ENCODE measurements at regions of chr5 and their contacts with region 1.

Region 1: GRCh38 chr5:142713121-142713706 is 27.3 kb upstream of the FGF1 start:
- DNase-seq: peak; percentile 91 to 95
- H3K4me3 ChIP-seq: peak overlapping the region; percentile 56
- H3K4me3 Mint-ChIP-seq: peak overlapping the region; percentile 73
- H3K27ac Mint-ChIP-seq: no peak overlapping the region
- H3K4me1 ChIP-seq: no peaks in the 10 kb centered on the region; the same call in 1 of the 2 replicates
- H3K4me1 Mint-ChIP-seq: peaks cover 7% of the 10 kb centered on the region
- H3K27me3 ChIP-seq: no peaks in the 10 kb centered on the region
- H3K27me3 Mint-ChIP-seq: no peaks in the 10 kb centered on the region
- CTCF ChIP-seq: peak; percentile 96 to 98

Region 2: DNA sequence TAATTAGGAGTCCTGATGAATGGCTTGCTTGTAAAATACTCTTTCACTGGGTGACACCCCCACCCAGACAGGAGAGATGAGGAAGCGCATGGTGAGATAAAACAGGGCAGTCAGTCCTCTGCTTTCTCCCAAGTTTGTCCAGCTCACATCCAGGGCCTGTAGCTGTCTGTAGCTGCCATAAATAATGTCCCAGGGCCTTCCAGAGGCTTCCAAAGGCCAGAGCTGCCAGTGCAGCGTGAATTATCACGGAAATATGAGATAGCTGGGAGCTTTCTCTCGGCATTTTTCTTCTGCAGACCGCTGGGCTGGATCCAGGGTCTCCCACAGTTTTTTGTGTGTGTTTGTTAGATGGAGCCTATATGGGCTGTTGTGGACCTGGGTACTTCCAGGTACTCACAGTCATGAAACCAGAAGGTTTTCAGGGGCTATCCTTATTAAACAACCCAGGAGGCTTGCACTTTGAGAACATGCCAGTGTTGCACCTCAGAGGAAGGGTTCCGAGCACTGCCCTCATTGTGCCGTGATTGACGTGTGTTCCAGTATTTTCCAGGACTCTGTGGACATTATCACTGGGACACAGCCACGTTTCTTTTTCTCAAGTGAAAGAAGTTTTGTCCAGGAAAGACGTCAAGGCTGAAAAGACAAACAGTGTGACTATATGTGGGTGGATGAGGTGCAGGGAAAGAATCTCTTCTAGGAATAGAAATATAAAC is 144.8 kb before region 1 on chr5:
- CTCF ChIA-PET with region 1: no interaction called
- POLR2A ChIA-PET with region 1: no interaction called
- intact Hi-C with region 1: no loop called
- DNase-seq: no peak
- H3K4me3 ChIP-seq: no peak overlapping the region
- H3K4me3 Mint-ChIP-seq: no peak overlapping the region
- H3K27ac Mint-ChIP-seq: no peak overlapping the region
- H3K4me1 ChIP-seq: no peaks in the 10 kb centered on the region
- H3K4me1 Mint-ChIP-seq: no peaks in the 10 kb centered on the region
- H3K27me3 ChIP-seq: no peaks in the 10 kb centered on the region
- H3K27me3 Mint-ChIP-seq: no peaks in the 10 kb centered on the region
- CTCF ChIP-seq: no peak

Region 3: GRCh38 chr5:142655339-142656267 is 57.6 kb before region 1 on chr5:
- CTCF ChIA-PET with region 1: interaction called, 24 read pairs
- POLR2A ChIA-PET with region 1: no interaction called
- intact Hi-C with region 1: no loop called
- DNase-seq: peak; percentile 73 to 87
- H3K4me3 ChIP-seq: no peak overlapping the region
- H3K4me3 Mint-ChIP-seq: no peak overlapping the region
- H3K27ac Mint-ChIP-seq: no peak overlapping the region
- H3K4me1 ChIP-seq: no peaks in the 10 kb centered on the region
- H3K4me1 Mint-ChIP-seq: no peaks in the 10 kb centered on the region
- H3K27me3 ChIP-seq: no peaks in the 10 kb centered on the region
- H3K27me3 Mint-ChIP-seq: peaks cover 8% of the 10 kb centered on the region
- CTCF ChIP-seq: peak; percentile 91 to 99

Region 4: DNA sequence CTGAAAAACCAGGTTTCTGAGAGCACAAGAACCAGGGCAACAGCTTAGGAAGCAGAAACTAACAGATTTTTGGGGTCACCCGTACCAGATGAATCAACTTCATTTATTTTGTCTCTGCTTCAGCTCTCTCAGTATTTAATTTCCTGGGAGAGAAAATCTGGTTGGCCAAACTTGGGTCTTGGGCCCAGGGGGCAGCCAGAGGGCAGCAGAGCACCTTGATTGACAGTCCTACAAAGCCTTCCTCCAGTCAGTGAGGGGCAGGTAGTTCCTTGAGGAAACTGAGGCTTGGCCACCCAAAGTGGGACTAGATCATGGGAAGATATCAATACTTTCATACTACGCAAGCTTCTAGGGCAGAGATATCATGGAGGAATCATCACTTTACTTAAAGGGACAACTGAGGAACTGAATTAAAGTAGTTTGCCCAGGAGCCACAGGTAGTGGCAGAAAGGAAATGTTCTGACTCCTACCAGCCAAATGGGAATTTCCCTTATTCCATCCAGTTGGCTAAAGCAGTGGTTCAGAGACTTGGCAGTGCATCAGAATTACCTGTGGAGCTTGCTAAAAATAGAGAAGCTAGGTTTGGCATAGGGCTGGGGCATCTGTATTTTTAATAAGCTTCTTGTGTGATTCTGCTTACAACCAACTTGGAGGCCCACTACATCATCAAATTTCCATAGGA is 35.5 kb after region 1 on chr5:
- CTCF ChIA-PET with region 1: interaction called, 17 read pairs
- POLR2A ChIA-PET with region 1: no interaction called
- intact Hi-C with region 1: loop called (anchors 1 kb)
- DNase-seq: peak; percentile 60 to 73
- H3K4me3 ChIP-seq: no peak overlapping the region
- H3K4me3 Mint-ChIP-seq: no peak overlapping the region
- H3K27ac Mint-ChIP-seq: no peak overlapping the region
- H3K4me1 ChIP-seq: no peaks in the 10 kb centered on the region
- H3K4me1 Mint-ChIP-seq: peaks cover 11% of the 10 kb centered on the region
- H3K27me3 ChIP-seq: no peaks in the 10 kb centered on the region
- H3K27me3 Mint-ChIP-seq: no peaks in the 10 kb centered on the region
- CTCF ChIP-seq: peak; percentile 80 to 94

Region 5: GRCh38 chr5:142881076-142881783 is 168.0 kb after region 1 on chr5:
- CTCF ChIA-PET with region 1: interaction called, 18 read pairs
- POLR2A ChIA-PET with region 1: no interaction called
- intact Hi-C with region 1: loop called (anchors 1 kb)
- DNase-seq: no peak
- H3K4me3 ChIP-seq: no peak overlapping the region
- H3K4me3 Mint-ChIP-seq: no peak overlapping the region
- H3K27ac Mint-ChIP-seq: no peak overlapping the region
- H3K4me1 ChIP-seq: peaks cover 17% of the 10 kb centered on the region
- H3K4me1 Mint-ChIP-seq: peaks cover 15% of the 10 kb centered on the region
- H3K27me3 ChIP-seq: no peaks in the 10 kb centered on the region
- H3K27me3 Mint-ChIP-seq: no peaks in the 10 kb centered on the region
- CTCF ChIP-seq: no peak

Region 6: GRCh38 chr5:142915813-142916424 is 202.7 kb after region 1 on chr5:
- CTCF ChIA-PET with region 1: interaction called, 9 read pairs
- POLR2A ChIA-PET with region 1: no interaction called
- intact Hi-C with region 1: loop called (anchors 1 kb)
- DNase-seq: peak; percentile 58 to 67
- H3K4me3 ChIP-seq: no peak overlapping the region
- H3K4me3 Mint-ChIP-seq: no peak overlapping the region
- H3K27ac Mint-ChIP-seq: no peak overlapping the region
- H3K4me1 ChIP-seq: peaks cover 9% of the 10 kb centered on the region; the same call in 1 of the 2 replicates
- H3K4me1 Mint-ChIP-seq: peaks cover 22% of the 10 kb centered on the region
- H3K27me3 ChIP-seq: no peaks in the 10 kb centered on the region
- H3K27me3 Mint-ChIP-seq: no peaks in the 10 kb centered on the region
- CTCF ChIP-seq: peak; percentile 76 to 91